CD4-positive, alpha-beta T cell (primary cell): ENCODE measurements at regions of chr10 and their contacts with region 1.

Region 1: DNA sequence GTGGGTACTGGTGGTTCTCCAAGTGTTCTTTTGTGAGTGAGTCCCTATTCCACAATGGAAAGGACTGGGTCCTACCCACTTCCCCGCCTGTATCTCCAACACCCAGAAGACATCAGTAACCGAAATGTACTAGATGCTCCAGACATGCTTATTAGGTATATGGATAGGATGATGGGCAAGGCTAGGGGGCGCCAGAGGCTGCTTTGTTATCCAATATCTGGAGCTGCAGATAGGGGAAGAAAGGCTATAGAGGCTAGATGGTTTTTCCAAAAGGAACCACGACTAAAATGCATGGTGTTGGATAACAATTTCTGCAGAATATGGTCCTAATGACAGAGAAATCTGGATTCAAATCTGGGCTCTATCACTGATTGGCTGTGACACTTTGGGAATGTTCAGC is 56.2 kb upstream of the TM9SF3 start:
- DNase-seq: peak in 9 of 14 experiments; percentile 15 to 63 (median 24)
- ATAC-seq: no peak
- H3K4me3 ChIP-seq: no peak overlapping the region
- H3K4me3 Mint-ChIP-seq: no peak overlapping the region
- H3K27ac ChIP-seq: no peak overlapping the region
- H3K27ac Mint-ChIP-seq: no peak overlapping the region
- H3K4me1 ChIP-seq: peaks cover 14% of the 10 kb centered on the region
- H3K4me1 Mint-ChIP-seq: no peaks in the 10 kb centered on the region
- H3K27me3 ChIP-seq: no peaks in the 10 kb centered on the region
- H3K27me3 Mint-ChIP-seq: no peaks in the 10 kb centered on the region
- CTCF ChIP-seq: no peak

Region 2: DNA sequence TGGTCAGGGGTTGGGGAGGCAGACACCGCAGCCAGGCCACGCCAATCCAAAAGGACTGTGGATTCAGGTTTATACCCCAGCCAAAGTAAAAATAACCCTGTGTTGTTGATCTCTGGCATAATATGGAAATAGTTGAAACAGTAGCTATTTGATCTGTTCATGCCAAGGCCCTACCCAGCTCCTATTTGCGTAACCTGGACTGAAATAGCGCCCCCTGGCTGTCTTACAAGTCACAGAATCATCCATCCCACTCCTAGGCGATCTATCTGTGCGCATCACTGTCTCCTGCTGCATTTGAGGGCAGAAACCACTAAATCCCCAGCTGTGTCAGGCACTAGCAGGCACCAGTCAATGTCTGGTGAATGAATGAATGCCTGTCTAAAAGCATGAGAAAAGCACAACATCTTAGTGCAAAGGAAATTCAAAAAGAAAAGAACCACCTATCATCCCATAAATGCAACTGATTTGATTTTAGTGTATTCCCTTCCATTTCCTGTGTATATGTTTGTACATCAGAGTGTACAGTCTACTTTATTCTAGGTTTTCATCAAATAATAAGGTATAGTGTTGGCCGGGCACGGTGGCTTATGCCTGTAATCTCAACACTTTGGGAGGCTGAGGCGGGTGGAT is 382.8 kb after region 1 on chr10:
- CTCF ChIA-PET with region 1: no interaction called
- POLR2A ChIA-PET with region 1: no interaction called
- intact Hi-C with region 1: loop called (anchors 5 to 10 kb)
- DNase-seq: peak in 13 of 14 experiments; percentile 12 to 72 (median 32)
- ATAC-seq: no peak
- H3K4me3 ChIP-seq: no peak overlapping the region
- H3K4me3 Mint-ChIP-seq: no peak overlapping the region
- H3K27ac ChIP-seq: no peak overlapping the region
- H3K27ac Mint-ChIP-seq: no peak overlapping the region
- H3K4me1 ChIP-seq: no peaks in the 10 kb centered on the region
- H3K4me1 Mint-ChIP-seq: no peaks in the 10 kb centered on the region
- H3K27me3 ChIP-seq: no peaks in the 10 kb centered on the region
- H3K27me3 Mint-ChIP-seq: no peaks in the 10 kb centered on the region
- CTCF ChIP-seq: peak; percentile 68

Region 3: DNA sequence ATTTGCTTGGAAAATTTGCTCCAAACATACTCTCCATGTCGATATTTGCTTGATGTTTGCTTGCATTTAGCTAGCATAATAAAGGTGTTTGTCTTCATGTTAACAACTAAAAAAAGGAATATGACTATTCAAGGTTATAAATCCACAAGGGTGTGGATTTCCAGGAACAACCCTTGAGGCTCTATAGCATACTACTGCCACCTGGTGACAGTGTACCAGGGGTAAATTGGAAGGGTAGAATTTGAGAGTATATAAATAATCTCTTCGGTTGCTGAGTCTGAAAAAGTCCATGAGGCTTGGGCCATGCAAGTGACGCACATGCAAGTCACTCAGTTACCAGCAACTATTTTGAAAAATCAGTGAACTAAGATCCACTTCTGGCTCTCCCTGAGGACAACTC is 474.4 kb after region 1 on chr10:
- CTCF ChIA-PET with region 1: no interaction called
- POLR2A ChIA-PET with region 1: no interaction called
- intact Hi-C with region 1: no loop called
- DNase-seq: no peak
- ATAC-seq: no peak
- H3K4me3 ChIP-seq: no peak overlapping the region
- H3K4me3 Mint-ChIP-seq: no peak overlapping the region
- H3K27ac ChIP-seq: no peak overlapping the region
- H3K27ac Mint-ChIP-seq: no peak overlapping the region
- H3K4me1 ChIP-seq: no peaks in the 10 kb centered on the region
- H3K4me1 Mint-ChIP-seq: no peaks in the 10 kb centered on the region
- H3K27me3 ChIP-seq: peaks cover 0 to 6% of the 10 kb centered on the region in 2 experiments
- H3K27me3 Mint-ChIP-seq: peaks cover 14% of the 10 kb centered on the region
- CTCF ChIP-seq: no peak